ENCODE measurements at regions of chr5 and their contacts with region 1.

Region 1: DNA sequence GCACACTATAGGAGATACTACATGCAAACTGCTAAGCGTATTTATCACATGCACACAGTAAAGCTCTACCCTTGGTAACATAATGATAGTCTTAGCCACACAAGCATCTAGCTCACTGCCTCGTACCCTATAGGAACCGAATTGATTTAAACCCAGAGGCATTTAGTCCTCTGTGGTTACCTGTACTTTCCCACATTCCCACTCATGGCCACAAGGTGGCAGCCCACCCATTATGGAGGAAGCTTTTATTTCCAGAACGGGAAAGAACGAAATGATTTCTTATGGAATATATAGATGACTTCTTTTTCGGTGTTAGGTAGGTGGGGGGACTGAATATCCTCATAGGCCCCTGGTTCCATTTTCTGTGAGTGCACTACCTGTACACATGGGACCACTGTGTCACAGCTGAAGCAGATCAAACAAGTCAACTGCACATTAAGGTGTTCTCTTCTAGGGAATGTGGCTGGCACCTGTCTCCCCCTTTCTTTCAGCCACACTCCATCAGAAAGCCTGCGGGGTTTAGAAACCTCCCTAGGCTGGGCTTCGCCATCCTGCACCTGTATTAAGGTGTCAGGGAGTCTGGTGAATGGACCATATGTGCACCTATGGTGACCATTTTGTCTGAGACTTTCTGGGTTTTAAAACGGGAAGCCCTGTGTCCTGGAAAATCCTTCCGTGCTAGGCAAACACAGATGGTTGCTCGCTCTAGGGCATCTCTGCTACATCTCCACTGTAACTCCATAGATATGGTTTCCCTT is 313.2 kb downstream of the SLIT3 start:
- DNase-seq: peak; percentile 63 to 93
- H3K4me3 ChIP-seq: no peak overlapping the region
- CTCF ChIP-seq: peak in 1 of 3 donors; percentile 78
- POLR2A ChIP-seq: no peak

Region 2: GRCh38 chr5:168637793-168638192 is 349.9 kb before region 1 on chr5:
- intact Hi-C with region 1: no loop called
- DNase-seq: no peak
- H3K4me3 ChIP-seq: no peak overlapping the region
- CTCF ChIP-seq: no peak
- POLR2A ChIP-seq: no peak

Region 3: GRCh38 chr5:168698991-168699401 is 288.7 kb before region 1 on chr5:
- intact Hi-C with region 1: loop called (anchors 10 kb)
- DNase-seq: no peak
- H3K4me3 ChIP-seq: no peak overlapping the region
- CTCF ChIP-seq: no peak
- POLR2A ChIP-seq: no peak

Region 4: GRCh38 chr5:169197343-169197742 is 209.6 kb after region 1 on chr5:
- intact Hi-C with region 1: loop called (anchors 10 kb)
- DNase-seq: no peak
- H3K4me3 ChIP-seq: no peak overlapping the region
- CTCF ChIP-seq: no peak
- POLR2A ChIP-seq: no peak

Region 5: DNA sequence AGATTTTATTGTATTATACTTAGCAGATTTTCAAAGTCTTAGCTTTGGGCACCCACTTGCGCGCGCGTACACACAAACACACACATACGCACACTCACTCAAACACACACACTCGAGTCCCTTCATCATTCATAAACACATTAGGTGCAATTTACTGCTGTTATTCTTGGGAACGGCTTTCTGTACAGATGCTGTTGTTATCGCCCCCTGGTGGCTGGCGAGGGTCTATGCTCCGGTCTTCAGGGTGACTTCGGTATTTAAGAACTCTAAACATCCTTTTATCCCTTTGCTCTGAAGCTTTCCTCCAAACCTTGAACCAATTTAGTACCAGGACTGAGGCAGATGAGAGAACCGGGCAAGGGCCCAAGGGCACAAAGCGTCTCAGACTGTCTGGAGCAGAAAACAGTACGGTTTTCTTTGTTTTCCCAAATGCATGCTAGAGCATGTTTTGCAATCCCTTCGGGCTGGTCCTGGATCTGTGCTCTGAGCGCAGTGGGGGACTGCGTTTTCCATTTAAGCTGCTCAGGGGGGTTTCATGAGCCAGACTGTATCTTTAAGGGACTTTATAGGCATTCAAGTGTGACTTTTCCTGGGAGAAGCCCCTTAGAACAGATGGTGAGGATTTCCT is 314.9 kb after region 1 on chr5:
- intact Hi-C with region 1: loop called (anchors 5 kb)
- DNase-seq: peak; percentile 72 to 95
- H3K4me3 ChIP-seq: no peak overlapping the region
- CTCF ChIP-seq: peak in 1 of 3 donors; percentile 88
- POLR2A ChIP-seq: no peak